ENCODE measurements at regions of chr20 and their contacts with region 1.

Region 1: DNA sequence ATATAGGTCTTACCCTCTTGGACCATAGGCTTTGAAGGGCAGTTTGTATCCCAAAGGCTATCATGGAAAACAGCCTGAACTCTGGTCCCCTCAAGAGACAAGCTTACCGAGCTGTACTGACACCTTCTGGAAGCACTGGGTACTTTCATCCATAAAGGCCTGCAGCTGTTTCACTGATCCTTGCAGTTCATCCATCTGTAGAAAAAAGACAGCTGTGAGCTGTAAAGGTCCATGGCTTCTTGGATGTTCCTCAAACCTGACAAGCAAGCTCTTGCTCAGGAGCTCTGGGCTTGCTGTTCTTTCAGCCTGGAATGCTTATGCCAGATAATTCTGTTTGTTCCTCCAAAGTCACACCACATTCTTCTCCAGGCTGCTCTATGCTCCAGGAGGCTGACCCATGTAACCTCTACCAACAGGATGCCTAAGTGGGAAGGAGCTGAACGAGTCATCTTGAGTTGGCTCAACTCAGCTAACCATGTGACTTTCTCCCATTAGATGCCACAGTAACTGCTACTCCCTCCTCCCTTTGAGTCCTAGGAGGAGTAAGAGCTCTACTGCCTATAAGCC is 8.8 kb upstream of the NDRG3 start:
- DNase-seq: peak; percentile 84
- ATAC-seq: peak; percentile 98
- H3K4me3 ChIP-seq: no peak overlapping the region
- H3K27ac ChIP-seq: no peak overlapping the region
- H3K4me1 ChIP-seq: peaks cover 8% of the 10 kb centered on the region; the same call in 1 of the 2 replicates
- H3K27me3 ChIP-seq: no peaks in the 10 kb centered on the region
- CTCF ChIP-seq: peak; percentile 95
- EP300 ChIP-seq: no peak
- POLR2A ChIP-seq: no peak
- RAD21 ChIP-seq: peak; percentile 91

Region 2: DNA sequence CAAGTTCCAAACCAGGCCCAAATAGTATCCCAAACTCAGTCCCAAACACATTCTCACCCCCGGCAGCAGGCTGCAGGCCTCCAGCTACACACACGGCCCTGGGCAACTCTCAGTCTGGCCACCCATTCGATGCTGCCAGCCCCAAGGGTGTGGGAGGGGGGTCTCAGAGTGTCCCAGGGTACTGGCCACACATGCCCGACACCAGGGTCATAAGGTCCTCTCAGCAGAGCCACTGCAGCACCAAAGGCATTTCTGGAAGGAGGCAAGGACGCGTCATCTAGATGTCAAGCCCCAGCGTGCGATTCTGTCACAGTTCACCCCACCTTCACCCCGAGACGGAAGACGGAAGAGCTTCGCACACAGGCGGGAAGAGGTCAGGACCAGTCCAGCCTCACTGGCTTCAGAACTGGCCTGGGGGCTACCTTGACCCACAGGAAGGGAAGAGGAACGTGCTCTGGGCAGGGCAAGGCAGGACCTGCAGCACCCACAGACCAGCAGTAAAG is 203.9 kb before region 1 on chr20:
- CTCF ChIA-PET with region 1: interaction called, 6 read pairs
- POLR2A ChIA-PET with region 1: no interaction called
- in situ Hi-C with region 1: no loop called
- intact Hi-C with region 1: loop called (anchors 10 kb)
- DNase-seq: no peak
- ATAC-seq: no peak
- H3K4me3 ChIP-seq: no peak overlapping the region; a peak in 1 of 6 replicates
- H3K27ac ChIP-seq: no peak overlapping the region
- H3K4me1 ChIP-seq: peaks cover 51% of the 10 kb centered on the region
- H3K27me3 ChIP-seq: no peaks in the 10 kb centered on the region
- CTCF ChIP-seq: no peak
- EP300 ChIP-seq: no peak
- POLR2A ChIP-seq: no peak
- RAD21 ChIP-seq: no peak

Region 3: DNA sequence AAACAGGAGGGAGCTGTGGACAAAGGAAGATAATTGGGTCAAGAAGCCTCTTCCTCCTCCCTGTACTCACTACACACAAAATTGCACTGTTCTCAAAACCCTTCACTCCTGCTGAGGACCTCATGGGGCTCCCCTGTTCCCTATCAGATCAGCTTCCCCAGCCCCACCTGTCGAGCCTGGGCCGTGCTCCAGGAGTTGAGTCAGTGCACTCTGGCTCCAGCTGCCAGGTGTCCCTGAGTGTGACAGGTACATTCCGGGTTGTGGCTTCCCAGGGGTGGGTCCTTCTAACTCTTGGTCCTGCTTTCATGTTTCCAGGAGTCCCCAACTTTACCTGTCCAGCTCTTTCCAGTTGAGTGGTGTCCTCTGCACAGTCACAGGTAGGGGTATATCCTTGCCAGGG is 140.8 kb before region 1 on chr20:
- CTCF ChIA-PET with region 1: interaction called, 20 read pairs
- POLR2A ChIA-PET with region 1: interaction called, 3 read pairs
- in situ Hi-C with region 1: loop called (anchors 5 kb)
- intact Hi-C with region 1: loop called (anchors 1 kb)
- DNase-seq: no peak
- ATAC-seq: peak; percentile 8
- H3K4me3 ChIP-seq: no peak overlapping the region
- H3K27ac ChIP-seq: no peak overlapping the region
- H3K4me1 ChIP-seq: no peaks in the 10 kb centered on the region
- H3K27me3 ChIP-seq: no peaks in the 10 kb centered on the region
- CTCF ChIP-seq: no peak
- EP300 ChIP-seq: no peak
- POLR2A ChIP-seq: peak in 1 of 2 experiments; percentile 38; a peak in 2 of 4 replicates
- RAD21 ChIP-seq: no peak

Region 4: DNA sequence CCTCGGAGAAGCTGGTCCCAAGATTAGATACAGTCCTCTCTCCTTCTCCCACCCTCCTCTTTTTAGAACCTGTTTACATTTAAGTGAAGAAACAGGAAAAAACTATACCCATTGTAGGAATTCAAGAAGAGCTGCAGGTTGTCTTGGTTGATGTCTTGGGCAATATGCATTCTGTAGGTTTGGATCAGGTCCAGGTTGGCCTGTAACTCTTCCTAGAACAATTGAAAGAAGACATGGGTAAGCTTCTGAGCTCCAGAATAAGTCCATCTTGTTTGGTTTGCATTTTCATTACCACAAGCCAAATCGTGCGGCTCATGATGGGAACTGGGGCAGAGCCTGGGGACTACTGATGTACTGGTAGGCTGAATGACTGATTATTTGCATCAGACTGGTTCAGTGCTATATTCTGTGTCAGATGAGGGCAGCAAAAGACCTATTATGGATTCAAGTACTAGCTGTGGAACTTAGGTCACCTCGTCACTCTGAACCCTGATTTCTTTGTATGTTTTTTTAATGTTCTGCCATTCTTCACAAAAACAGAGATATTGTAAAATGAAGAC is 88.5 kb before region 1 on chr20:
- CTCF ChIA-PET with region 1: interaction called, 9 read pairs
- POLR2A ChIA-PET with region 1: no interaction called
- in situ Hi-C with region 1: no loop called
- intact Hi-C with region 1: loop called (anchors 1 kb)
- DNase-seq: peak; percentile 43
- ATAC-seq: peak; percentile 78
- H3K4me3 ChIP-seq: no peak overlapping the region
- H3K27ac ChIP-seq: no peak overlapping the region
- H3K4me1 ChIP-seq: peaks cover 10% of the 10 kb centered on the region
- H3K27me3 ChIP-seq: no peaks in the 10 kb centered on the region
- CTCF ChIP-seq: peak; percentile 62
- EP300 ChIP-seq: no peak
- POLR2A ChIP-seq: no peak
- RAD21 ChIP-seq: peak; percentile 42; the same call in 1 of the 2 replicates

Region 5: GRCh38 chr20:36717657-36718056 is 37.1 kb before region 1 on chr20:
- CTCF ChIA-PET with region 1: interaction called, 15 read pairs
- POLR2A ChIA-PET with region 1: no interaction called
- in situ Hi-C with region 1: no loop called
- intact Hi-C with region 1: loop called (anchors 1 kb)
- DNase-seq: peak; percentile 45
- ATAC-seq: peak; percentile 72
- H3K4me3 ChIP-seq: no peak overlapping the region
- H3K27ac ChIP-seq: no peak overlapping the region
- H3K4me1 ChIP-seq: peaks cover 9% of the 10 kb centered on the region
- H3K27me3 ChIP-seq: no peaks in the 10 kb centered on the region
- CTCF ChIP-seq: peak; percentile 62
- EP300 ChIP-seq: no peak
- POLR2A ChIP-seq: no peak
- RAD21 ChIP-seq: peak; percentile 42; the same call in 1 of the 2 replicates

Measured in HepG2 (cell line).